Activated B cell treated with CpG ODN at 0.5 μM for 24 hours (primary cell): ENCODE measurements at regions of chr10 and their contacts with region 1.

Region 1: DNA sequence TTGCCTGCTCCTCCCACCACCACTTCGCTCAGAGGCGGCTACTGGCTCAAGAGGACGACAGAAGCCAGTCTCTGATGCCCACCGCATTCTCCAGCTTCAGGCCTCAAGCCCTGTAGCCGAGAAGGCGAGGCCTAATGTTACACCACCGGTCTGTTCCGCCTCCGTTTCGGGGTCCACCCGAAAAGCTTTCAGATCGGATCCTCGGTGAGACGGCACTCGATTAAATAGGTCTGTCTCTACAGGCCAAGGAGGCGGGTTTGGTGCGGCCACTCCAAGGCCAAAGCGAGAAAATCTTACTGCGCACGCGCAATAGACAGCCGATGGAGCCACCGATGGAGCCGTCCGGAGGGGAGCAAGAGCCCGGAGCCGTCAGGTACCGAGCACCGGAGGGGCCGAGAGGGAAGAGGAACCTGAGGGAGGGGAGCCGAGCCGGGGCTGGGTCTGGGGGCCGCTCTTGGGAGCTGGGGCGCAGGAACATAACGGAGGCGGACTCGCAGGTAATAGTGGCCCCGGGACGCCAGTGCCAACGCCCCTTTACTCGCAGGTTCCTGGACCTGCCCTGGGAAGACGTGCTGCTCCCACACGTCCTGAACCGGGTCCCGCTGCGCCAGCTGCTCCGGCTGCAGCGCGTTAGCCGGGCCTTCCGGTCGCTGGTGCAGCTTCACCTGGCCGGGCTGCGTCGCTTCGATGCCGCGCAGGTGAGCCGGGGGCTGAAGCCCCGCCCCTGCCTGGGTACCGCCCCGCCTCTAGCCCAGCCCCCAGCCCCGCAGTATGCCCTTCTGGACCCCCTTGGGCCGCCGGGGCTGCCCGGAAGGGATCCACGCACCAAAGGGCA is at the start of gene FBXL15:
- DNase-seq: peak; percentile 93
- ATAC-seq: peak; percentile 78
- H3K4me3 Mint-ChIP-seq: peak within 1 kb of the TSS; percentile 98
- H3K27ac Mint-ChIP-seq: peak within 1 kb of the TSS; percentile 95
- H3K4me1 Mint-ChIP-seq: peaks cover 45% of the 10 kb centered on the region
- H3K27me3 Mint-ChIP-seq: peaks cover 17% of the 10 kb centered on the region
- CTCF ChIP-seq: no peak
- total RNA-seq, gene FBXL15: 15.7 and 18.9 TPM in 2 replicates

Region 2: DNA sequence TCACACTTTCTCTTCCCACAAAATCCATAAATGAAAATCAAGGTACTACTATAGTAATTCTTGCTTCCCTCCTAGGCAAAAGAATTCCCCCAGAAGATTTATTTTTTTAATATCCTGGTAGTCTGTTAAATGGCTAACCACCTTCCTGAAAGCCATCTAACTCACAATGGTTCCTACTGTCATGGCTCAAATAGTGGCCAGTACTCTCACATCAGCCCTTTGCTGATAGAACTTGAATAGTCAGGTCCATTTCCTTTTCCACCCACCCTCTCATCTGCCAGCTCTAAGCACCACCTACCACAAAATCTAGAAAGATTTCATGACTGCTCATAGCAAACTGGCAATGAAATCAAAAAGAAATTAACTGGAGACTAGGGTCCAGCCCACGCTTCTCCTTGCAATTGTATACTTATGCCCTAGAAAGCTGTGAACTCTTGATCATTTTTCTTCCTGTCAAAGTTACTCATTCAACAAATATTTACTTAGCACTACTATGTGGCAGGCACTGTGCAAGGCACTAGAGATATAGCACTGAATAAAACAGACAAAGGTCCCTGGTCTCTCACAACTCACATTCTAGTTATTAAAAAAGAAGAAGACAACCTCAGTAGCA is 425.5 kb before region 1 on chr10:
- CTCF ChIA-PET with region 1: no interaction called
- POLR2A ChIA-PET with region 1: no interaction called
- intact Hi-C with region 1: no loop called
- DNase-seq: no peak
- ATAC-seq: no peak
- H3K4me3 Mint-ChIP-seq: no peak overlapping the region
- H3K27ac Mint-ChIP-seq: peak overlapping the region; percentile 3
- H3K4me1 Mint-ChIP-seq: peaks cover 56% of the 10 kb centered on the region
- H3K27me3 Mint-ChIP-seq: no peaks in the 10 kb centered on the region
- CTCF ChIP-seq: no peak

Region 3: GRCh38 chr10:102132563-102133372 is 288.3 kb before region 1 on chr10 and contains the start of gene PPRC1:
- CTCF ChIA-PET with region 1: no interaction called
- POLR2A ChIA-PET with region 1: no interaction called
- intact Hi-C with region 1: loop called (anchors 1 kb)
- DNase-seq: peak; percentile 89
- ATAC-seq: peak; percentile 93
- H3K4me3 Mint-ChIP-seq: peak within 1 kb of the TSS; percentile 99
- H3K27ac Mint-ChIP-seq: peak within 1 kb of the TSS; percentile 98
- H3K4me1 Mint-ChIP-seq: peaks cover 41% of the 10 kb centered on the region
- H3K27me3 Mint-ChIP-seq: no peaks in the 10 kb centered on the region
- CTCF ChIP-seq: peak; percentile 81
- total RNA-seq, gene PPRC1: 65.1 and 77.2 TPM in 2 replicates

Region 4: GRCh38 chr10:102245101-102245931 is 175.7 kb before region 1 on chr10 and contains the start of gene GBF1:
- CTCF ChIA-PET with region 1: no interaction called
- POLR2A ChIA-PET with region 1: interaction called, 4 read pairs
- intact Hi-C with region 1: loop called (anchors 1 kb)
- DNase-seq: peak; percentile 76
- ATAC-seq: peak; percentile 88
- H3K4me3 Mint-ChIP-seq: peak within 1 kb of the TSS; percentile 98
- H3K27ac Mint-ChIP-seq: peak within 1 kb of the TSS; percentile 91
- H3K4me1 Mint-ChIP-seq: peaks cover 58% of the 10 kb centered on the region
- H3K27me3 Mint-ChIP-seq: peaks cover 22% of the 10 kb centered on the region
- CTCF ChIP-seq: no peak
- total RNA-seq, gene GBF1: 40.8 and 44.3 TPM in 2 replicates

Region 5: DNA sequence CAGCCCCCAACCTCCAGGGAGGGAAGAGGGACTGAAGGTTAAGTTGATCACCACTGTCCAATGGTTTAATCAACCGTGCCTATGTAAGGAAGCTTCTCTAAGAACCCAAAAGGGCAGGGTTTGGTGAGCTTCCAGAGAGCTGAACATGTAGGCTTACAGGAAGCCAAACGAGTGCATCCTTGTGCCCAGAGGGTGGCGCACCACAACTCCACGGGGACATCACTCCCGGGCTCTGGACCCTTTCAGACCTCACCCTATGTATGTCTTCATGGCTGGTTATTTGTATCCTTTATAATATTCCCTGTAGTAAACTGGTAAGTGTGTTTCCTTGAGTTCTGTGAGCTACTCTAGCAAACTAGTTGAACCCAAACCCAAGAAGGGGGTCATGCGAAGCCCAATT is 37.0 kb before region 1 on chr10:
- CTCF ChIA-PET with region 1: interaction called, 7 read pairs
- POLR2A ChIA-PET with region 1: interaction called, 14 read pairs
- intact Hi-C with region 1: no loop called
- DNase-seq: no peak
- ATAC-seq: peak; percentile 28
- H3K4me3 Mint-ChIP-seq: no peak overlapping the region
- H3K27ac Mint-ChIP-seq: peak overlapping the region; percentile 50
- H3K4me1 Mint-ChIP-seq: peaks cover 18% of the 10 kb centered on the region
- H3K27me3 Mint-ChIP-seq: no peaks in the 10 kb centered on the region
- CTCF ChIP-seq: no peak

Region 6: GRCh38 chr10:102408728-102409603 is 12.1 kb before region 1 on chr10:
- CTCF ChIA-PET with region 1: interaction called, 5 read pairs
- POLR2A ChIA-PET with region 1: interaction called, 305 read pairs
- intact Hi-C with region 1: loop called (anchors 1 kb)
- DNase-seq: peak; percentile 36
- ATAC-seq: peak; percentile 45
- H3K4me3 Mint-ChIP-seq: peak overlapping the region; percentile 59
- H3K27ac Mint-ChIP-seq: no peak overlapping the region
- H3K4me1 Mint-ChIP-seq: peaks cover 40% of the 10 kb centered on the region
- H3K27me3 Mint-ChIP-seq: peaks cover 42% of the 10 kb centered on the region
- CTCF ChIP-seq: no peak

Region 7: DNA sequence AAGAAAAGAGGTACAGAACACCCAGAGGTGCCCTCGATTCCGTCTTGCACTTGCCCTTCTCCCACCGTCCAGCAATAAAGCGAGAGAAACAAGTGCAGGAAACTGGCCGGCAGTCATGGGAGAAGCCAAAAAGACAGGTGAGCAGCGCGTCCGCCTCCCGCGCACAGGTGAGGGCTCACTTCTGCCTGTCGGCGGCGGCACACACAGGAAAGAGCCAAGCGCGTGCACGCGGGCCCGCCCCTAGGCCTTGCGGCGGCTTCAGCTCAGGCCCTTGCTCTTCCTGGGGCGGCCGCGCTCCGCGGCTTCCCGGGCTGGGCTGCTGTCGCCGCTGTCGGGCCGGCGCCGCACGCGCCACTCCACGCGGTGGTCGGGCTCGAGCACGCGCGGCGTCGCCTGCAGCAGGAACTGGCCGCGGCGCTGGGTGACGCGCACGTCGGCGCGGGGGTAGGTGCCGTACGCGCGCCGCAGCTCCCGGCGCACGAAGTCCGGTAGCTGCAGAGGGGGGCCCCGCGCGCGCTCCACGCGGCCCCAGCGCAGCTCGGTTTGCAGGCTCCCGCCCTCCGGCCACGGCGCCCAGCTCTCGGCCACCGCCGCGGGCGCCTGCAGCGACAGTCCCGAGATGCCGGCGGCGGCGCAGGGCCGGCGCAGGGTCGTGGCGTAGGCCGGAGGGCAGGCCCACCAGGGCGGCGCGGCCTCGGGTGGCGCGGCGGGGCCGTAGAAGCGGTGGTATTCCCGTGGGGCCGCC is 29.3 kb after region 1 on chr10:
- CTCF ChIA-PET with region 1: interaction called, 4 read pairs
- POLR2A ChIA-PET with region 1: interaction called, 28 read pairs
- intact Hi-C with region 1: loop called (anchors 1 kb)
- DNase-seq: peak; percentile 84
- ATAC-seq: peak; percentile 82
- H3K4me3 Mint-ChIP-seq: peak overlapping the region; percentile 92
- H3K27ac Mint-ChIP-seq: peak overlapping the region; percentile 94
- H3K4me1 Mint-ChIP-seq: peaks cover 24% of the 10 kb centered on the region
- H3K27me3 Mint-ChIP-seq: no peaks in the 10 kb centered on the region
- CTCF ChIP-seq: no peak

Region 8: GRCh38 chr10:102480396-102480795 is 59.4 kb after region 1 on chr10:
- CTCF ChIA-PET with region 1: interaction called, 24 read pairs
- POLR2A ChIA-PET with region 1: interaction called, 4 read pairs
- intact Hi-C with region 1: loop called (anchors 1 kb)
- DNase-seq: no peak
- ATAC-seq: no peak
- H3K4me3 Mint-ChIP-seq: no peak overlapping the region
- H3K27ac Mint-ChIP-seq: no peak overlapping the region
- H3K4me1 Mint-ChIP-seq: peaks cover 7% of the 10 kb centered on the region
- H3K27me3 Mint-ChIP-seq: no peaks in the 10 kb centered on the region
- CTCF ChIP-seq: no peak